Left colon (tissue), 2 donors: ENCODE measurements at regions of chr11 and their contacts with region 1.

Region 1: DNA sequence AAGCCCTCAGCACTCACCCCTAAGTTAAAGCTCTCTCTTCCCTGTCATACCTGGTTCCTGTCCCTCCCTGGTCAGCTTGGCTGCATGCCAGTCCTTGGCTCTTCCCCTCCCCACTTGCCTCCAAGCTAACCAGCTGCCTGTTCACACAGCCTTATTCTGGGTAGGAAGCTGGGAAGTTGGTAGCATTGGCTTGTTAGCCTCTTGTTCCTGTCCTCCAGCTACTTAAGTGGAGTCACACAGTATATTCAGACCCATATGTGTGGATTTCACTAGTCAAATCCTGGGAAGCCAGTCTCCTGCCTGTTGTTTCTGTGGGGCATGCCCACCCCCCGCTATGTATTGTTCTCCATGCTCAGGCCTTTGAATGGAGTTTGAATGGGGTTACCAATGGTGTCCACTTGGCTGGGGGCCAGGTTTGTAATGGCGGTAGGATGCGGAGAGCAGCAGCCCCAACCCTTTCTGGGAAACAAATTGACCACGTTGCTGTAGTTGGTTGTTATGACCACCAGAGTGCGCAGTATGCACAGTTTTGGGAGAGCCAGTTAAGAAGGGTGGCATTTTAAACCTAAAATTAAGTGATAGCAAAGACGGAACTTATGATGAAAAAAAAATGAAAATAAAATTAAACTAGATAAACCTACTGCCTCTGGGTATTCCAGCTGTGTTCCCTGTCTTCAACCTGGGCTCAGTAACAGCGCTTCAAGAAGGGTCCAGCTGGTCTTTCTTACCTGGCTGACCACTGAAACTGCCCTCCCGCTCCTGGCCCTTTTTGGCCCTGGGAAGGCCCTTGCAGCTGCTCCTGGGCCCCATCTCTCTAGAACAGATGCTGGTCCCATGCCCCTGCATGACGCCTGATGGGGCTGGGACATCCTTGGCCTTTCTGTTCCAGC is 10.7 kb upstream of the RPS3 start:
- DNase-seq: peak; percentile 77 to 79
- ATAC-seq: peak; percentile 56

Region 2: GRCh38 chr11:75270896-75271418 is 117.7 kb before region 1 on chr11:
- intact Hi-C with region 1: loop called in 1 of 2 experiments (anchors 5 kb)
- DNase-seq: peak in 1 of 2 donors; percentile 17
- ATAC-seq: no peak

Region 3: DNA sequence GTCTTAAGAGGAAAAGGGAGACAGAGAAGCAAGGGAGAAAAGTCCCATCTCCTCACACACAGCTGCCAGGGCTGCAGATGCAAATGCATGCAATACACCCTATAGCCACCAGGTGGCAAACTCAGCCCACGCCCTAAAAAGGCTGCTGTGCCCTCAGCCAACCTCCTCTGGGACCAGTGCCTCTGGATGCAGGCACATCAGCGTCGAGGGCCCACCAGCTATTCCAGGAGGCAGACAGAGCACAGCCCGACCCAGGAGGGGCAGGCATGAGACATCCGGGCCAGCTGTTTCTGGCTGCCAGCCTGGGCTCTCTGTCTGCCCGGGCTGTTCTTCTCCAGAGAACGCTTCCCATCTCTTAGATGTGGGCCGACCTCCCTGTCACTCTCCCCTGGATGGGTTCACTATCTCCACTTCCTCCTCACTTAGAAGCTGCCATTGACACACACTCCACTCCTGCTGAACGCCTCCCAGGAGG is 108.4 kb before region 1 on chr11:
- intact Hi-C with region 1: loop called in 1 of 2 experiments (anchors 1 kb)
- DNase-seq: peak; percentile 66 to 80
- ATAC-seq: peak; percentile 83

Region 4: DNA sequence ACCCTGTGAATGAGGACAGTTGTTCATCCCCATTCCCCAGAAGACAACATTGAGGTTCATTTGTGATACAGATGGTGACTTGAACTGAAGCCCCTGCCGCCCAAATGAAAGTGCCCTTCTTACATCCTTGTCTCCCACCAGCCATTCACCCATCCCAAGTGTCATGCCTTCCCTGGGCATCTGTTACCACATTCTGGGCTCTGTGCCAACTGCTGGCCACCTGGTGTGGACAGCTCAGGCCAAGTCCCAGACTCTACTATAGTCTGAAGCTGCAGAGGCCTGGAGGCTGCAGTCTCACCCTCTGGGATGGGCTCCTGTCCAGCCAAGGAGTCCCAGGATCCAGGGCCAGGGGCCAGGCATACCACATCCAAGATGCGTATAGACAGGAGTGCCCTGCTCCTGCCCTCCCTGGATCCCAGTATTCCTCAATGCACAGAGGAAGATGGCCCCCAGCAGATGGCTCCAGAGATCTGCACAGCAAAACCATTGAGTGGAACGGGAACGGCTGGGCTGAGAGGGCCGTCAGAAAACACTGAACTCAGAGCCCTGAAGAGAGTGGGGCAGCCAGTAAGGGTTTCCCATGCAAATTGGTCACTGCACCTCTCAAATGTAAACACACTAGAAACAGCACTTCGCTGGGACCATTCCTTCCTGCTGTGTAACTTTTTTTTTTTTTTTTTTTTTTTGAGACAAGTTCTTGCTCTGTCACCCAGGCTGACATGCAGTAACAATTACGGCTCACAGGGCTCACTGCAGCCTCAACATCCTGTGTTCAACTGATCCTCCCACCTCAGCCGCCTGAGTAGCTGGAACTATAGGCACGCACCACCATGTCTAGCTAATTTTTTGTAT is 60.0 kb before region 1 on chr11:
- intact Hi-C with region 1: loop called in 1 of 2 experiments (anchors 5 kb)
- DNase-seq: peak; percentile 84 to 85
- ATAC-seq: peak; percentile 70

Region 5: DNA sequence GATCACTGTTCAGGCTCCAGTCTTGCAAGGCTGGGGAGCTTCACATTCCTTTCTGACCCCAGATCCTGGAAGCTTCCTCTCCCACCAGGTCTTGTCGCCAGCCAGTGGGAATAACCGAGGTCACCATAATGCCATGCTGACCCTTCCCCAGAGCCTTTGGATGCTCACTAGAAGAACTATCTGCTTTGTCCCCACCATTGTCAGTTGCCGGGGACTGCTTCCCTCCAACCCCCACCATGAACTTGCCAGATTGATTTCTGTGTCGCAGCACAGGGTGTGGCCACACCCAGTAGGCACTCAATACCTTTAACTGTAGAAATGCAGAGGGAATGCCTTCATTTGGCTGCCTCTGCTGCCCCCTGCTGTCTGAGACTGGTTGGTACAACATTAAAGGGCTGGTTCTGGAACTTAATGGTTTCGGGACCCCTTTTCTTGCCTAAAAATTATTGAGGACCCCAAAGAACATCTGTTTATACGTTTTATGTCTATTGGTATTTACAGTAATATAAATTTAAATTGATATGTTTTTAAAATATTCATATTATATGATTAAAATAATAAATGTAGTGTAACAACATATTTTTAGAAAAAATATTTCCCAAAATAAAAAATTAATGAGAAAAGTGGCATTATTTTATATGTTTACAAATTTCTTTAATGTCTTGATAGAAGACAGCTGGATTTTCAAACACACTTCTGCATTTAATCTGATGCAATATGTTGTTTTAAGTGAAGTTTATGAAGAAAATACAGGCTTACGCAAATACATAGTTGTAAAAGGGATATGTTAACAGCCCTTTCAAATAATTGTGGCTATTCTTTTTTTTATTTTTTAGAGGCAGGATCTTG is 143.8 kb after region 1 on chr11:
- intact Hi-C with region 1: loop called in 1 of 2 experiments (anchors 5 kb)
- DNase-seq: peak; percentile 51 to 77
- ATAC-seq: peak; percentile 64

Region 6: DNA sequence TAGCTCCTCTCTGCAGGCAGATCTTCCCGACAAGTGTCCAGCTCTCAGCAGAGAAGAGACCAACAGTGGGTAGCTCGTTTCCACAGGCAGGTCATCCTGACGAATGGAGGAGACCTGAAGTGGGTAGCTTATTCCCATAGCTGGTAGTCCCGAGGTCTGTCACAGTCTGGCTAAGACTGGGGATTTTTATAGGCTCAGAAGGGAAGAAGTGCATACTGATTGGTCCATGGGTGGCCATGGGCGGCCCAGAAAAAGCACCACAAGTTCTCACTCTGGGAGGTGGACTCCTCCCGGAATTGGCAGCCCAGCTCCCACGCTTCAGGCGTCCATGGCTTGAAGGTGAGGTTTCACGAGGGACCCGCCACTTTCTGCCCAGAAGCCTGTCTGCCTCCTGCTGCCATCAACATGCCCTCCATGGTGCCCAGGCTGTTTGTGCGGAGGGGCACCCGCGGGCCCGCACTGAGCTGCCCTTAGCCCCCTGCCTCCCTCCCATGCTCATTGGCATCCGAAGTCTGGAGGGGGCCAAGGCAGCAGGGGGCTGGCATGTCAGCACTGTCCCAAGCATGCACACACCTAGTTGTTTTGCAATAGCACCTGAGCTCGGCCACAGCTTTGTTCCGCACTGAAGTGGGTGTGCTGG is 290.1 kb after region 1 on chr11:
- intact Hi-C with region 1: no loop called
- DNase-seq: no peak
- ATAC-seq: no peak